Activated CD4-positive, alpha-beta memory T cell treated with anti-CD3 and anti-CD28 coated beads for 36 hours (primary cell): ENCODE measurements at regions of chr11 and their contacts with region 1.

Region 1: DNA sequence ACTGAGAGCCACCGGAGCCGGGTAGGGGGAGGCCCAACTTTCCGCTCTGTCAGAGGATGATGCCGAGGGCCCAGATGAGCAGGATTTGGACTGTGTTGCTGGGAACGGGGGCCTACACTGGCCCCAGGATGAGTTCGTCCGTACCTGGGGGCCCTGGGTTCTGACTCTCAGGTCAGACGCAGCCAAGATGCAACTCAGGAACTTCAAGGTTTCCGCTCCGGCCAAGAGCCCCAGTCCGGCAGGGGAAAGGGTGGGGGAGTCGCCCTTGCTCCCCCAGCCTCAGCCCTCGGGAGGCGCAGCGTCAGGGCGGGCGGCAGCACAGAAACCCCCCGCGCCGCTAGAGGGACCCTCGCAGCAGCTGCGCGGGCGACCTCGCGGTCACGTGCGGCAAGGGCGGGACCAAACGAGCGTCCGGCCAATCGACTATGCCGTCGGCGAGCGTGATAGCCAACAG is 241 bp upstream of the ARL2 start:
- DNase-seq: peak; percentile 89
- H3K4me3 Mint-ChIP-seq: peak overlapping the region; percentile 87
- H3K27ac Mint-ChIP-seq: peak overlapping the region; percentile 98
- H3K4me1 Mint-ChIP-seq: peaks cover 25% of the 10 kb centered on the region
- H3K27me3 Mint-ChIP-seq: no peaks in the 10 kb centered on the region

Region 2: GRCh38 chr11:64742889-64743590 is 270.7 kb before region 1 on chr11:
- CTCF ChIA-PET with region 1: no interaction called
- POLR2A ChIA-PET with region 1: no interaction called
- intact Hi-C with region 1: no loop called
- DNase-seq: peak; percentile 84
- H3K4me3 Mint-ChIP-seq: peak overlapping the region; percentile 37
- H3K27ac Mint-ChIP-seq: no peak overlapping the region
- H3K4me1 Mint-ChIP-seq: peaks cover 25% of the 10 kb centered on the region
- H3K27me3 Mint-ChIP-seq: peaks cover 8% of the 10 kb centered on the region

Region 3: GRCh38 chr11:64887757-64888405 is 125.8 kb before region 1 on chr11:
- CTCF ChIA-PET with region 1: interaction called, 25 read pairs
- POLR2A ChIA-PET with region 1: no interaction called
- intact Hi-C with region 1: no loop called
- DNase-seq: peak; percentile 89
- H3K4me3 Mint-ChIP-seq: peak overlapping the region; percentile 66
- H3K27ac Mint-ChIP-seq: peak overlapping the region; percentile 42
- H3K4me1 Mint-ChIP-seq: peaks cover 30% of the 10 kb centered on the region
- H3K27me3 Mint-ChIP-seq: no peaks in the 10 kb centered on the region

Region 4: DNA sequence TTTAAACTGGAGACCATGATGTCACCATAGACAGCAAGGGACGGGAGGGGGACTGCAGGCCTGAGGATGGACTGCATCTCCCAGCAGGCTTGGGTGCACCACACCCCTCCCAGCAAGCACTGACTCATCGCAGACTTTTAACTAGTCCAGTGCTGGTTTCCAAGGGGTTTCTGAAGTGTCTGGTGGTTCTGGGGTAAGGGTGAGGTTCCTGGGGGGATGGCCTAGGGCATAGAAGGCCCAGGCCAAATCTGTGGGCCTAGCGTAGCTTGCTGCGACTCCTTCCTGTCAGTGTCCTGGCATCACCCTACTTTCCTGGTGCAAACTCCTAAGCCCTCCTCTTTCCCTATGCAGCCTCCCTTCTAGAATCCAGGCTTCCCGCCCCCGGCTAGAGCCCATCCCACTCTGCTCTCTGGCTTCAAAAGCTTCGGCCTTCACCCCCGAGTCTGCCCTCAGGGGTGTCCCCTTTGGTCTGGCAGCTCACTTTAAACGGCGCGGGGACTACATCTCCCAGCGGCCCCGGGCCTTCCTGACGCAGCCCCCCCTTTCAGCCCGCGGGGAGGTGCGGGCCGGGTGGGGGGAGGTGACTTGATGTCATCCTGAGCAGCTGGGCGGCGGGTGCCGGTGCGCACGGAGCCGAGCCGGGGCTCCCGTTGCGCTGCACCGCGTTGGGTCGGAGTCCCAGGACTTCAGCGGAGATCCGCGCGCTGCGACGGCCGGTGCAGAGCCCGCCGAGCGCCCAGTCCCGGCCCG is 89.4 kb before region 1 on chr11 and contains the start of gene PPP2R5B:
- CTCF ChIA-PET with region 1: interaction called, 11 read pairs
- POLR2A ChIA-PET with region 1: interaction called, 7 read pairs
- intact Hi-C with region 1: loop called (anchors 1 kb)
- DNase-seq: peak; percentile 93
- H3K4me3 Mint-ChIP-seq: peak within 1 kb of the TSS; percentile 85
- H3K27ac Mint-ChIP-seq: peak within 1 kb of the TSS; percentile 90
- H3K4me1 Mint-ChIP-seq: peaks cover 15% of the 10 kb centered on the region
- H3K27me3 Mint-ChIP-seq: no peaks in the 10 kb centered on the region
- total RNA-seq, gene PPP2R5B: 9.7 to 11.9 TPM

Region 5: GRCh38 chr11:65027213-65028067 is 13.7 kb after region 1 on chr11 and contains the start of gene SNX15:
- CTCF ChIA-PET with region 1: interaction called, 59 read pairs
- POLR2A ChIA-PET with region 1: interaction called, 7 read pairs
- intact Hi-C with region 1: loop called (anchors 1 kb)
- DNase-seq: peak; percentile 95
- H3K4me3 Mint-ChIP-seq: peak within 1 kb of the TSS; percentile 65
- H3K27ac Mint-ChIP-seq: peak within 1 kb of the TSS; percentile 86
- H3K4me1 Mint-ChIP-seq: peaks cover 14% of the 10 kb centered on the region
- H3K27me3 Mint-ChIP-seq: no peaks in the 10 kb centered on the region
- total RNA-seq, gene SNX15: 15.4 to 15.9 TPM

Region 6: DNA sequence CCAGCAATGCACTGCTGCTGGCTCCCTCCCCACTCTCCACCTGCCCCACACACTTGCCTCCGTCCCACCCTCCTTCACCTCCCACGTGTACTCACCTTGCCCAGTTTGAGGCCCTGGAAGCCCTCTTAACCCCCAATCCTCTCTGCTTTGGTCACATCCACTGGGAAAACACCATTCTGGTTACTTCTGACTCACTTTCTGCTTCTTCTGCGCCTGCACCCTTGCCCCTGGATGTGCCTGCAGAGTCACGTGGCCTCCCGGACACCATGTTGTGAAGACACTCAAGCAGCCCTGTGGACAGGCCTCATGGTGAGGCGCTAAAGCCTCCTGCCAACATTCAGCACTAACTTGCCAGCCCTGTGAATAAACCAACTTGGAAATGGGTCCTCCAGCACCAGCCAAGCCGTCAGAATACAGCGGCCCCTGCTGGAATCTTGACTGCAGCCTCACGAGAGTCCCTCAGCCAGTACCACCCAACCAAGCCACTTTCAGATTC is 47.2 kb after region 1 on chr11:
- CTCF ChIA-PET with region 1: interaction called, 3 read pairs
- POLR2A ChIA-PET with region 1: no interaction called
- intact Hi-C with region 1: loop called (anchors 5 kb)
- DNase-seq: no peak
- H3K4me3 Mint-ChIP-seq: no peak overlapping the region
- H3K27ac Mint-ChIP-seq: no peak overlapping the region
- H3K4me1 Mint-ChIP-seq: no peaks in the 10 kb centered on the region
- H3K27me3 Mint-ChIP-seq: no peaks in the 10 kb centered on the region

Region 7: DNA sequence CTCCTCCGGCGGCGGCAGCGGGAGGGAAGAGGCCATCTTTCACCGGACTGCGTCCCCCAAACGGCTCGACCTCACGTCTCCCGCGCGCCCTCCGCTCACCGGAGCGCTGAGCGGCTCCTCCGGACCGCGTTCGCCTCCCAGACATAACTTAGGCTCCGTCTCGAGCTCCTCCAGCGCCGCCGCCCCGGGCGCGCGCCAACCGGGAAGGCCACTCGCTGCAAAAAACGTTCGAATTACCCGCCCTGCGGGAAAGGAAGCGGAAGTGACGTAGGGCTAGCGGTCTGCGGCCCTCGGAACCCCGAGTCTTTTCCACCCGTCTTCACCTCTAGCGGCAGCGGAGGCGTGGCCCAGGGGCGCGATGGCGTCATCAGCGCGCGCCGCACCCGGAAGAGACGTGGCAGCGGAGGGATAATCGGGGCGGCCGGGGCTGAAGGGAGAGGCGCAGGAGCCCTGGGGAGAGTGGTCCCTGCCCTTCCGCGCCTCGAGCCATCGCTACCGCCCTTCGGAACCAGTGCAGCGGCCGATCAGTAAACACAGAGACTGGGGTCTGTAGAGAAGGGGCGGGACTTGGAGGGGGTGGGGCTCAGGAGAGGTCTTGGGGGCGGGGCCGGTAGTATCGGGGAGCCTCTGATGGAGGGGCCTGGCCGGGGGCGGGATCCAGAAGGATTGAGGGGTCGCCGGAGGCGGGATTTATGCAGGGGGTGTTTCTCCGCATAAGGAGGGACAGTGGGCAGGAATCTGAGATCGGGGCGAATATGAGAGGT is 70.3 kb after region 1 on chr11 and contains the starts of genes CDCA5 and ZFPL1:
- CTCF ChIA-PET with region 1: interaction called, 8 read pairs
- POLR2A ChIA-PET with region 1: no interaction called
- intact Hi-C with region 1: loop called (anchors 5 kb)
- DNase-seq: peak; percentile 97
- H3K4me3 Mint-ChIP-seq: peak within 1 kb of the TSS; percentile 99
- H3K27ac Mint-ChIP-seq: peak within 1 kb of the TSS; percentile 96
- H3K4me1 Mint-ChIP-seq: peaks cover 36% of the 10 kb centered on the region
- H3K27me3 Mint-ChIP-seq: no peaks in the 10 kb centered on the region
- total RNA-seq, gene CDCA5: 111 to 112 TPM
- total RNA-seq, gene ZFPL1: 28.3 to 31.3 TPM

Region 8: DNA sequence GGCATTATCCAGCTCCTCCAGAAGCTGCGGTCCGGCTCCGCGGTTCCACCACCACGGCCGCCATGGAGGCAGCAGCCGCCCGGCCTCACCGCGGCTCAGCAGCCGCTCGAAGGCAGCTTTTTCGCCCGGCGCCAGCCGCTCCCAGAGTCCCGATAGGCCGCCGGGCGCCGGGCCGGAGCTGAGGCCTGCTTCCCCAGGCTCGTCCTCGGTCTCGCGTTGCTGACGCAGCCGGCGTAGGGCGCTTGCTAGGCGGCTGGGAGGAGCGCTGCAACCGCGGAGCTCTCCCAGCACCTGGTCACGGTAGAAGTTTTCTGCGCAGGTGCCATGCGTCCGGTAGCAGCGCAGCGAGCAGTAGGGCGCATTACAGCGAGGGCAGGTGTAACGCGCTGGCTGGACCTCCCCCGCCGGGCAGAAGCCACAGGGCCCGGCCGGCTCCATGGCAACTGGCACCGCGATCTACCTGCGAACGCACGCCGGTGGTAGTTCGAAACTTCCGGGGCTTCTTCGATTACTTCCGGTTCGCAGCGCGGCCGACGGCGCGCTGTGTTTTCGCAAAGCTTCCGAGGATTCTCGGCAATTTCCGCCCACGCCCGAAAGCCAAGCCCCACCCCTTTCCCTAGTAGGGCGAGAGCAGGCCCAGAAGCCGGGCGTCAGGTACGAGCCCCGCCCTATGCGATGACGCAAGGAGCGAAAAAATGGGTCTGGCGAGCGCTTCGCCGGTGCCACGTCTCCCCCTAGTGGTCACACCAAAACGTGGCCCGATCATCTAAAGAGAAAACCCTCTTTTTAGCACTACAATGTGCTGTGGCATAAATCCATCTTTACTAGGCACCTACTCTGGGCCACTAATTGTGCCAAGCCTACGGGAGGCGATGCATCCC is 103.7 kb after region 1 on chr11 and contains the start of gene ZNHIT2:
- CTCF ChIA-PET with region 1: interaction called, 46 read pairs
- POLR2A ChIA-PET with region 1: interaction called, 6 read pairs
- intact Hi-C with region 1: loop called (anchors 1 kb)
- DNase-seq: peak; percentile 100
- H3K4me3 Mint-ChIP-seq: peak within 1 kb of the TSS; percentile 86
- H3K27ac Mint-ChIP-seq: peak within 1 kb of the TSS; percentile 95
- H3K4me1 Mint-ChIP-seq: peaks cover 68% of the 10 kb centered on the region
- H3K27me3 Mint-ChIP-seq: no peaks in the 10 kb centered on the region
- total RNA-seq, gene ZNHIT2: 9.3 to 9.7 TPM

Region 9: DNA sequence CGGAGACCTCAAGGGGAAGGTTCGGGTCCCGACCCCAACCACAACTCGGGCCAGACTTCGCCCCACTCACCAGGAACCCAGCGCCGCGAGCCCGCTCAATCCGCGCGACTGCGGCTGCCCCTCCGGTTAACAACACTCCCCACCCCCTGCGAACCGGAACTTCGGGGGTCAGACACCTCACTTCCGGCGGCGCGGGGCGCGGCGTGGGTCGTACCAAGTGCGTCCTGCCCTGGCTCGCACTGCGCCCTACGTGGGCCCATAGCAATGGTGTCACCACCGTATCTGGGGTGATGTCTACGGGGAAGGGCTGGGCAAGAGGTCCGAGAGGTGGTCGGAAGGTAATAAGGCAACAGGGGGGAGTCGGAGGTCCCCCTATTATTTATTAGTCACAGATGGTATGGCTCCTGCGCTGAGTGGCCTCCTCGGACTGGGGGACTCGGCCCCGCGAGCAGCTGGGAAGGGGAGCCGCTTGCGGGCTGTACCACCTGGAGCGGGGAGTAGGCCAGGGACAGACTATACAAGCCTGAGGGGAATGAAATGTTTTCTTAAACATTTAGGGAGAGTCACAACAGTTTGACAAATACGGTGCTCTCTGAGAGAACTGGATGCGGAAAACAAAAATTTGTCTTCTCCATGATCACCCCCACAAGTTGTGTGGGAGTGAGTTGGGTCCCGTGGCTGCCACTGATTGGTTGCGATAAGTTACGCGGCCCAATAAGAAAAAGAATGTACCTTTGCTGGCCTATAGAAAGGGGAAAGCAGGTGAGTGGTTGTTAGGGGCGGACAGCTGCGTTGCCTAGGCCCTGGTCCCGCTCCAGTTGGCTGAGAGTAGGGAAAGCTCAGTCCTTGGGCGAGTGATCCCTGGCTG is 120.9 kb after region 1 on chr11 and contains the start of gene SYVN1:
- CTCF ChIA-PET with region 1: no interaction called
- POLR2A ChIA-PET with region 1: no interaction called
- intact Hi-C with region 1: no loop called
- DNase-seq: peak; percentile 94
- H3K4me3 Mint-ChIP-seq: peak within 1 kb of the TSS; percentile 99
- H3K27ac Mint-ChIP-seq: peak within 1 kb of the TSS; percentile 99
- H3K4me1 Mint-ChIP-seq: peaks cover 31% of the 10 kb centered on the region
- H3K27me3 Mint-ChIP-seq: no peaks in the 10 kb centered on the region
- total RNA-seq, gene SYVN1: 24.5 to 26.2 TPM